Activated T-helper 1 cell treated with anti-CD3 and anti-CD28 coated beads, Interleukin-12 subunit alpha, Interleukin-12 subunit beta, Interleukin-2, Interleukin-4 antibody, amounts not matched to agents 30 ng/mL and 10 ng/mL and 1 ng/mL, durations not matched to agents 14 hours and 24 hours and 36 hours (primary cell): ENCODE measurements at regions of chr1 and their contacts with region 1.

Region 1: GRCh38 chr1:85027242-85027983 is 20.9 kb downstream of the MCOLN3 start:
- DNase-seq: no peak
- H3K4me3 Mint-ChIP-seq: no peak overlapping the region
- H3K27ac Mint-ChIP-seq: peak overlapping the region; percentile 53
- H3K4me1 Mint-ChIP-seq: peaks cover 10% of the 10 kb centered on the region
- H3K27me3 Mint-ChIP-seq: peaks cover 6% of the 10 kb centered on the region

Region 2: DNA sequence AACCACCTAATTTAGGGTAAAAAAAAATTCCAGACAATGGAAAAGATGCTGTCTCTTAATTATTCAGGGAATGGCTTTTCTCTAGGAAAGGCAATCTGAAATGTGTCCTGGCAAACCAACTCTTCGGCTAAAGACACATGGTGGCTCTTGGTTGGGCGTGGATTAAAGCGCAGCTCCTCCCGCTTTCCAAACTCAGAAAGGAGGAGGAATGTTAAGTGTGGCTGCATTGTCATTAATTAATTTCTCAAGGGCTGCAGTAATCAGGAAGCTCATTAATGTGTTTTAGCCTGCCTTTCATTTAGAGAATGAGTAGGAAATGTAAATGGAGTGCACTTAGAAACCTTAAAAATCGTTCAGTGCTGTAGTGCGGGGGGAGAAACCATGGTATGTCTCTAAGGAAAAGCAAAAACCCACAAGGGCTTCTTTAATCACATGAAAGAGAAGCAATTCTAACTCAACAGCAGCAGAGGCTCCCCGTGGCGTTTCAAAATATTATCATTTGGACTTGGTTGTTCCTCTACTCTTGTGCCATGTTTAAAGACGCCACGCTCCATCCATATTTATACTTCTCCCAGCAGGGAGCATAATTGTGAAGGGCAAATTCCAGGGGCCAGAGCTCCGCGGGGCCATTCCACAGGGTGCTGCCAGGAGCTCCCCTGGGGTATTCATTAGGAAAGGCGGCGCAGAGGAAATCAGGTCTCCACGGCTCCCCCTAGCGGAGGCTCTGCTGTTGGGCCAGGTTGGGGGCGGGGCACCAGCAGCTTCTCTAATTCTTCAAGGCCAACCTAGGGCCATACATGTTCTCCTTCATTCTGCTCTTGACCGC is 245.3 kb before region 1 on chr1:
- intact Hi-C with region 1: loop called (anchors 5 kb)
- DNase-seq: peak; percentile 57
- H3K4me3 Mint-ChIP-seq: peak overlapping the region; percentile 71
- H3K27ac Mint-ChIP-seq: no peak overlapping the region
- H3K4me1 Mint-ChIP-seq: peaks cover 36% of the 10 kb centered on the region
- H3K27me3 Mint-ChIP-seq: peaks cover 3% of the 10 kb centered on the region

Region 3: DNA sequence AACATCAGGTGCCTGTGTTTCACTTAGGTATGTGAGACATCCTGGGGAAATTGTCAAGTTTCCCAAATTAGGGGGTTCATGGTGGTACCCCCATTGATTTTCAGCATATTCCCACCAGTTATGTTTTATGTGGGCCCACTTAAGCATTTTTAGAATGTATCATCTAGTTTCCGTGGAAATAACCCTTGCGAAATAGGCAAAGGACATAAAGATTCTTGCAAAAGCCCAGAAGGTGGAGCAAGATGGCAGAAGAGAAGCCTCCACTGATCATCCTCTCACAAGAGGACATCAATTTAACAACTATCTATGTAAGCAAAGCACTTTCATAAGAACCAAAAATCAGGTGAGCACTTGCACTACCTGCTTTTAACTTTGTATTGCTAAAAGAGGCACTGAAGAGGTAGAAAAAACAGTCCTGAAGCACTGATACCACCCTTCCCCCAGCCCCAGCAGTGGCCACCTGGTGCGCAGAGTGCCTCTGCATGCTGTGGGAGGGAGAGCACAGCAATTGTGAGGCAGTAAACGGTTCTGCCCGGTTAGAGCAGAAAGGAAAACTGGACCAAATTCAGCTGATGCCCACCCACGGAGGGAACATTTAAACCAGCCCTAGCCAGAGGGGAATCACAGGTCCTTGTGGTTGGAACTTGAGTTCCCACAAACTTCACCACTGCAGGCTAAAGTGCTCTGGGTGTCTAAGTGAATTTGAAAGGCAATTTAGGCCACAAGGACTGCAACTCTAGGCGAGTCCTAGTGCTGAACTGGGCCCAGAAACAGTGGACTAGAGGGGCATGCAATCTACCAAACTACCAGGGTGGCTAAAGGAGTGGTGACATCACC is 53.7 kb before region 1 on chr1:
- intact Hi-C with region 1: loop called (anchors 1 kb)
- DNase-seq: peak; percentile 13
- H3K4me3 Mint-ChIP-seq: peak overlapping the region; percentile 32
- H3K27ac Mint-ChIP-seq: peak overlapping the region; percentile 70
- H3K4me1 Mint-ChIP-seq: peaks cover 82% of the 10 kb centered on the region
- H3K27me3 Mint-ChIP-seq: no peaks in the 10 kb centered on the region

Region 4: DNA sequence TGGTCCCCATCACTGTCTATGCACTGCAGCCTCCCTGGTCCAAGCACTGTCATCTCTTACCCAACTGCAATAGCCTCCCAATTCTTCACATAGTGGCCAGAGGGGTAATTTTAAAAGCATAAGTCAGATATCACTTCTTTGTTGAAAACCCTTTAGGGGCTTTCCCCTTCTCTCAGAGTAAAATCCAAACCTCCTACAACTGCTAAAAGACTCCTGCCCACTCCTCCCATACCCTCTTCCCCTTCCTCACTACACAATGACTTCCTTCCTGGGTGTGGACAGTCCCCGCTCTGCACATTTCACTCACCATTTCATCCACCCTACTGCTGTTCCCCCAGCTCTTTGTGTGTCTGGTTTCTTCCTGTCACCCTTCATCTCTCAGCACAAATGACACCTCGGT is 38.8 kb before region 1 on chr1:
- intact Hi-C with region 1: loop called (anchors 5 kb)
- DNase-seq: peak; percentile 19
- H3K4me3 Mint-ChIP-seq: peak overlapping the region; percentile 45
- H3K27ac Mint-ChIP-seq: peak overlapping the region; percentile 75
- H3K4me1 Mint-ChIP-seq: peaks cover 71% of the 10 kb centered on the region
- H3K27me3 Mint-ChIP-seq: no peaks in the 10 kb centered on the region

Region 5: DNA sequence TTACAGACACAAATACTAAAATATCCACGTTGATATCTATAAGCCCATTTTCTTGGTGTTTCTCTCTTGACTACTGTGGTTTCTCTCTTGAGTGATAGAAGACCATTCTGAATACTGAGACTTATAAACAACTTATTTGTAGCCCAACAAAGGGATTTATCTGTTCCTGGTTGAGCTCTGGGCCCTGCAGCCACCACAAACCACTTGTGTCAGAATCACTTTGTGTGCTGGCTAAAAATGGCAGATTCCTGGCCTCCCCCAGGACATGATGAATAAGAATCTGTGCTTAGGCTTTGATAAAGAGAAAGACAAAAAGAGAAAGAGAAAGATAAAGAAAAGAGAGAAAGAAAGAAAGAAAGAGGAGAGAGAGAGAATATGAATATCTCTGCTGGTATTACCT is 11.6 kb before region 1 on chr1:
- intact Hi-C with region 1: no loop called
- DNase-seq: no peak
- H3K4me3 Mint-ChIP-seq: no peak overlapping the region
- H3K27ac Mint-ChIP-seq: no peak overlapping the region
- H3K4me1 Mint-ChIP-seq: no peaks in the 10 kb centered on the region
- H3K27me3 Mint-ChIP-seq: peaks cover 20% of the 10 kb centered on the region

Region 6: DNA sequence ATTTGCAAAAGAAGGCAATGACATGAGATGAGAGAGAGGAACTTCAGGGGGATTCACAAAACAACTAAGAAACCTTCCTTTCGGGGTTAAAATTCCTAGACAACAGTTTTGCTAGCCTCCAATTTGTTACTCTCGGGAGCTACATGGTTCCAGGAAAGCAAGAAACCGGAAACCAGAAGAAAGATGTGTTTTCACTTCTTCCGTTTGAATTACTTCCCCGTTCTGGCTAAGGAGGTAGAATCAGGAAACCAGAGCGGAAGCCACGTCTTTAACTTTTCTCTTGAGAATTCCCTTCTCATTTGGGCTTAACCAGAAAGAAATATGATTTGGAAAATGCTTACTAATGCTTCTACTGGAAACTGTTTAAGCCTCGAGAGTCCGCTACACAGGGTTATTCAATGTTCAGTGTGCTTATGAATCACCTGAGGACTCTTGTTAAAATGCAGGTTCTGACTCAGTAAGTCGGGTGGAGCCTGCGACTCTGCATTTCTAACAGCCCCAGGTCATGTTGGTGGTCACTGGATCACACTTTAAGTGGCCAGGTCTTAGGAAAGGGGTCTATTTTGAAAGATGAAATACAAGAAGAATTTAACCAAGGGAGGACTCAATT is 64.4 kb after region 1 on chr1:
- intact Hi-C with region 1: no loop called
- DNase-seq: no peak
- H3K4me3 Mint-ChIP-seq: peak overlapping the region; percentile 69
- H3K27ac Mint-ChIP-seq: no peak overlapping the region
- H3K4me1 Mint-ChIP-seq: peaks cover 15% of the 10 kb centered on the region
- H3K27me3 Mint-ChIP-seq: peaks cover 22% of the 10 kb centered on the region